ENCODE measurements at regions of chr20 and their contacts with region 1.

Region 1: DNA sequence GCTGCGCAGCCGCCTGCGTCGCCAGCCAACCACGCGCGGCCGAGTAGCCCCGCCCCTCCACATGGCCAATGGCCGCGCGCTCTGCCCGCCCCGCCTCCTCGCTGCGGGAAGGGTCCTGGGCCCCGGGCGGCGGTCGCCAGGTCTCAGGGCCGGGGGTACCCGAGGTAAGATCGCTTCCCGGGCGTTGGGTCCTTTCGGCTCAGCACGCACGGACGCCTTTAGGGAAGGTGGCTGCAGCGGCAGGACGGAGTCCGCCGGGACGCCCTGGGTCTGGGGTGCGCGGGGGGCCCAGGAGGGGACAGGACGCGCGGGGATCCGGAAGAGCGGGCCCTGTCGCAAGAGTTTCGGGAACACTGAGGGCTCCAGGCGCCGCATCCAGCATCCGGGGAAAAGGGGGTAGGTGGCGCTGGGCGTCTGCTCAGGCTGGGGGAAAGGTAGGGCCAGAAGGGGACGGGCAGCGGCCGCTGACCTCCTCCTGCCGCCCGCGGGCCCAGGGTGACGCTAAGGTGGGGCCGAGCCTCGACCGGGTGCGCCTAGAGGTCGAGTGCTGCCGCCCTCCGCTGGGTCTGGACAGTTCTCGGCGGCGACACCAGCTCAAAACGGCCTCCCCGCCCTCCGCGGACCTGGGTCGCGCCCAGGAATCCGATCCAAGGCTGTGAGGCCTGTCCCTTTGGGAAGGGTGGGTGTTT is at the start of gene MAVS:
- DNase-seq: peak; percentile 90
- H3K4me3 ChIP-seq: peak within 1 kb of the TSS; percentile 96
- H3K27ac ChIP-seq: peak within 1 kb of the TSS; percentile 19
- H3K4me1 ChIP-seq: peaks cover 20% of the 10 kb centered on the region
- CTCF ChIP-seq: peak; percentile 21; the same call in 1 of the 2 replicates
- total RNA-seq, gene MAVS: 15.3 and 19.8 TPM in 2 replicates

Region 2: GRCh38 chr20:3795511-3796468 is 51.1 kb before region 1 on chr20 and contains the start of gene CDC25B:
- CTCF ChIA-PET with region 1: no interaction called
- POLR2A ChIA-PET with region 1: interaction called, 4 read pairs
- intact Hi-C with region 1: loop called (anchors 2 kb)
- DNase-seq: peak; percentile 94
- H3K4me3 ChIP-seq: peak within 1 kb of the TSS; percentile 91
- H3K27ac ChIP-seq: peak within 1 kb of the TSS; percentile 83
- H3K4me1 ChIP-seq: peaks cover 46% of the 10 kb centered on the region
- CTCF ChIP-seq: peak; percentile 54
- total RNA-seq, gene CDC25B: 86.1 and 89.2 TPM in 2 replicates

Region 3: GRCh38 chr20:3820048-3820900 is 26.6 kb before region 1 on chr20 and contains the start of gene AP5S1:
- CTCF ChIA-PET with region 1: no interaction called
- POLR2A ChIA-PET with region 1: interaction called, 9 read pairs
- intact Hi-C with region 1: loop called (anchors 1 kb)
- DNase-seq: peak; percentile 97
- H3K4me3 ChIP-seq: peak within 1 kb of the TSS; percentile 91
- H3K27ac ChIP-seq: peak within 1 kb of the TSS; percentile 70
- H3K4me1 ChIP-seq: peaks cover 37% of the 10 kb centered on the region
- CTCF ChIP-seq: peak; percentile 98
- total RNA-seq, gene AP5S1: 6.2 and 9.8 TPM in 2 replicates

Region 4: DNA sequence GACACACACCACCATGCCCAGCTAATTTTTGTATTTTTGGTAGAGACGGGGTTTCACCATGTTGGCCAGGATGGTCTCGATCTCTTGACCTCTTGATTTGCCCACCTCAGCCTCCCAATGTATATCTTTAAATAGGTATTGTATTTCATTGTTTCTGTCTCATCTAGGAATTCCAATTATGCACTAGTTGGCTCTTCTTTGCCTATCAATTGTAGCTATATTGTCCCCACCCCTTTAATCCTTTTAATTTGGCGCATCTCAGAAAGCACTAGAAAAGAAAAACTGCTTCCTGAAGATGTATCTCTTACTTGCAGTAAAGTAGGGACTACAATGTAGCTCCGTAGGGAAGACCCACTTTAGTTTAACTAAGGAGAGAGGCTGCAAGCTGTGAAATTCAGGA is 10.8 kb before region 1 on chr20:
- CTCF ChIA-PET with region 1: no interaction called
- POLR2A ChIA-PET with region 1: interaction called, 10 read pairs
- intact Hi-C with region 1: no loop called
- DNase-seq: no peak
- H3K4me3 ChIP-seq: no peak overlapping the region
- H3K27ac ChIP-seq: no peak overlapping the region
- H3K4me1 ChIP-seq: no peaks in the 10 kb centered on the region
- CTCF ChIP-seq: no peak

Measured in OCI-LY7 (cell line).